Breast epithelium (tissue), 4 donors: ENCODE measurements at regions of chr7 and their contacts with region 1.

Region 1: GRCh38 chr7:70997261-70997660 is 134.7 kb upstream of the GALNT17 start:
- DNase-seq: no peak
- H3K4me3 ChIP-seq: no peak overlapping the region
- H3K27ac ChIP-seq: no peak overlapping the region
- H3K4me1 ChIP-seq: no peaks in the 10 kb centered on the region
- H3K27me3 ChIP-seq: no peaks in the 10 kb centered on the region
- CTCF ChIP-seq: no peak
- POLR2A ChIP-seq: no peak

Region 2: DNA sequence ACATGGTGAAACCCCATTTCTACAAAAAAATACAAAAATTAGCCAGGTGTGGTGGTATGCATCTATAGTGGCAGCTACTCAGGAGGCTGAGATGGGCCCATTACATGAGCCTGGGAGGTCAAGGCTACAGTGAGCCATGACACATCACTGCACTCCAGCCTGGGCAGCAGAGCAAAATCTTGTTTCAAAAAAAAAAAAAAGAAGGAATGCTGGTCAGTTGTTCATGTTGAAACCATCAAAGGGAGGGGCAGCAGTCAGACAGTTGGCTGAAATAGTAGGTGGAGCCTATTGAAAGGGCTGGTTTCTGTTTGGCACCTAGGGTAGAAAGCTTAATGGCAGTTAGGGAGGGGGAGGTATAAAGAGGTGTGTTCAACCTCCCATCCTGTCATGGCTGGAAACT is 457.7 kb after region 1 on chr7:
- intact Hi-C with region 1: loop called (anchors 5 kb)
- DNase-seq: no peak
- H3K4me3 ChIP-seq: no peak overlapping the region
- H3K27ac ChIP-seq: no peak overlapping the region
- H3K4me1 ChIP-seq: no peaks in the 10 kb centered on the region
- H3K27me3 ChIP-seq: no peaks in the 10 kb centered on the region
- CTCF ChIP-seq: no peak
- POLR2A ChIP-seq: no peak